ENCODE measurements at regions of chr4 and their contacts with region 1.

Region 1: DNA sequence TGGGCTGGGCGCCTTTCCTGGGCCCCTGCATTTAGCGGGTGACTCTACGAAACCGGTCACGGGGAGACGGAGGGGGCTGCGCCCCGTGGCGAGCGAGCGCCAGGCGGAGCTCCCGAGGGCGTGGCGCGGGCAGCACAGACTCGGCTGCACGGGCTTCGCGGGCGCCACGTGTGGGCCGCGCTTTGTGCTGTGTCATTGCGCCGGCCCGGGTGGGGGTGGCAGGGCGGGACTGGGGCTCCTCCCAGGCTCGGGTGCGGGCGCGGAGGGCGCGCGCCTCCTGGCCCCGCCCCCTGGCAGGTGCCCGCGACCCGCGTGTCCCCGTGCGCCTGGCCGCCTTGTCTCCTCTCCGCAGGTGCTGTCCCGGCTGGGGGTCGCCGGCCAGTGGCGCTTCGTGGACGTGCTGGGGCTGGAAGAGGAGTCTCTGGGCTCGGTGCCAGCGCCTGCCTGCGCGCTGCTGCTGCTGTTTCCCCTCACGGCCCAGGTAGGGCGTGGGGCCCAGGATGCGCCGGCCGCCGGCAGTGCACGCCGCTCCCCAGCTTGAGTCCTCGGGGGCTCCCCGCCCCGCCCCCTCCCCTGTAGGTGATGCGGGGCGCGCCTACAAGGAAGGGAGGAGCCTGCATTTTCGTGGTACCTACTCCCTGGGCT is 651 bp downstream of the UCHL1 start:
- DNase-seq: peak; percentile 36
- H3K4me3 ChIP-seq: peak overlapping the region; percentile 35 to 54 (median 48)
- H3K27ac ChIP-seq: peak overlapping the region; percentile 0
- H3K4me1 ChIP-seq: peaks cover 12% of the 10 kb centered on the region
- H3K27me3 ChIP-seq: peaks cover 14 to 15% of the 10 kb centered on the region in 2 experiments
- CTCF ChIP-seq: no peak
- POLR2A ChIP-seq: no peak

Region 2: GRCh38 chr4:40685300-40685699 is 572.1 kb before region 1 on chr4:
- CTCF ChIA-PET with region 1: no interaction called
- POLR2A ChIA-PET with region 1: no interaction called
- dilution Hi-C with region 1: no loop called
- intact Hi-C with region 1: no loop called
- DNase-seq: no peak
- H3K4me3 ChIP-seq: no peak overlapping the region
- H3K27ac ChIP-seq: no peak overlapping the region
- H3K4me1 ChIP-seq: no peaks in the 10 kb centered on the region
- H3K27me3 ChIP-seq: peaks cover 2 to 6% of the 10 kb centered on the region in 2 experiments
- CTCF ChIP-seq: no peak
- POLR2A ChIP-seq: no peak

Region 3: DNA sequence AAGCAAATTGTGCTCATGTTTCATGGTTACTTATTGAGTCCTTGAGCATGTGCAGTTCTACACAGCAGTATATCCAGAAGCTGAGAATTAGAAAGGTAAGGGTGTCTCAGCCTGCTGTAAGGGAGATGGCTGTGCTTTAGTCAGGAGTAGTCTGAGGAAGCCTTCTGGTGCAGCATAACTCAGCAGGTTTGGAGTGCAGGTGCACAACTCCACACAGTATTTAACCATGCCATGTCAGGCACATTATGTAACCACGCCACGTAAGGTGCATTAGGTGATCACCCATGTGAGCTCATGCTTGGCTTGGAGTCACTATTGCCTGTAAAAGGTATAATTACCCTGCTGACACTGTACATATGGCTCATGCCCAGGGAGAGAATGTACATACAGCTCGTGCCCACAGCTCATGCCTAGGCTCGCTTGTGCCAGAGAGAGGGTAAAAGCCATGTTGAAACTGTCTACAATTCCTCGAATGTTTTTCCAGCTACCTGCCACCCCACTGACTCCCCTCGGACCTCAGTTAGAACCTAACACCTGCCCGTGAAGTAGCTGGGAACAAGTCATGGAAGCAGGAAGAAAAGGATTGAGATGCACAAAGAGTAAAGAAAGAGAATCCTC is 37.2 kb after region 1 on chr4:
- CTCF ChIA-PET with region 1: no interaction called
- POLR2A ChIA-PET with region 1: no interaction called
- dilution Hi-C with region 1: no loop called
- intact Hi-C with region 1: no loop called
- DNase-seq: no peak
- H3K4me3 ChIP-seq: no peak overlapping the region
- H3K27ac ChIP-seq: no peak overlapping the region
- H3K4me1 ChIP-seq: peaks cover 2% of the 10 kb centered on the region
- H3K27me3 ChIP-seq: peaks cover 3% of the 10 kb centered on the region in 2 experiments
- CTCF ChIP-seq: no peak
- POLR2A ChIP-seq: no peak

Region 4: DNA sequence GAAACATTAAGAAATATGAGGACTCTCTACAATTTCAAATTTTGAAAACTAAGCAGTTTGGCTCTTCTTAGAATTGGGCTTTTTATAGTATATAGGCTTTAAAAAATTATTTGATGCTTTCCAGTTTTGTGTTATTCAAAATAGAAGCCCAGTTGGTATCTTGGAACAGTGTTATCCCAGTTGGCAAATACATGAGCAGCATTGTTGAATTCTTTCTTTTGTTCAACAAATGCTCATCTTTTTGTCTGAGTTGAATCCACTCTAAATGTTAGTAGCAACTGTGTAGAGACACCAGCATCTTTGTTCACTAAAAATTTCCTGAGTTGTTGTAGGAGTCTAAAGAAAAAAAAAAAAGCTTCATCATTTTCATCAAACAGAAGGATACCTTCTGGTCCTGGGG is 239.6 kb after region 1 on chr4:
- CTCF ChIA-PET with region 1: no interaction called
- POLR2A ChIA-PET with region 1: no interaction called
- dilution Hi-C with region 1: no loop called
- intact Hi-C with region 1: no loop called
- DNase-seq: no peak
- H3K4me3 ChIP-seq: no peak overlapping the region
- H3K27ac ChIP-seq: no peak overlapping the region
- H3K4me1 ChIP-seq: no peaks in the 10 kb centered on the region
- H3K27me3 ChIP-seq: peaks cover 8 to 12% of the 10 kb centered on the region in 2 experiments
- CTCF ChIP-seq: no peak
- POLR2A ChIP-seq: no peak

Region 5: DNA sequence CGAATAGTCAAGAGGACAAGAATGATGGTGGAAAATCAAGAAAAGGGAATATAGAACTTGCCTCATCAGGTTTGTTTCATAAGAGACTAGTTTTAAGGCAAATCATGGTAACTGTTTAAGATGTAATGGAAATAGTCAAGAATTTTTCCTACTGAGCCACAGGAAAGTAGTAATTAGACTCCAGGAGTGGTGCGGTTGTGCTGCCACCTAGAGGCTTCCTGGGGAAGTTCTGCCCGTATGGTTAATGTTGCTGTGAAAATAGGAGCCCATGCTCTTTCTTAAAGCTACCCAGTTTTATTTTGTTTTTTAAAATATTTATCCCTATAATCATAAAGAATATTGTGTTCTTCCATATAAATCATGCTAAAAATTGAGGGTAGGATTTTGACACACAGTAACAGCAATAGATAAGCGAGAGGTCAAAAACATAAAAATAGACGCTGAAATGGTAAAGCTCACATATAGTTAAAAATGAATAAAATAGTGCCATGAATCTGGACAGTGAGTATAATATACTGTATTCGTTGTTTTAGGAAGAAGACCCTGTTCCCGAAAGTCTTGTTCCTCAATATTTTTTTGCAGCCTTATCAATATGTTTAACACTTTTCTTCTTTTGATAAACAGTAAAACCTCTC is 404.2 kb after region 1 on chr4:
- CTCF ChIA-PET with region 1: interaction called, 40 read pairs
- POLR2A ChIA-PET with region 1: no interaction called
- dilution Hi-C with region 1: no loop called
- intact Hi-C with region 1: no loop called
- DNase-seq: peak; percentile 69
- H3K4me3 ChIP-seq: no peak overlapping the region
- H3K27ac ChIP-seq: no peak overlapping the region
- H3K4me1 ChIP-seq: no peaks in the 10 kb centered on the region
- H3K27me3 ChIP-seq: peaks cover 2 to 12% of the 10 kb centered on the region in 2 experiments
- CTCF ChIP-seq: peak; percentile 82 to 87
- POLR2A ChIP-seq: no peak

Region 6: DNA sequence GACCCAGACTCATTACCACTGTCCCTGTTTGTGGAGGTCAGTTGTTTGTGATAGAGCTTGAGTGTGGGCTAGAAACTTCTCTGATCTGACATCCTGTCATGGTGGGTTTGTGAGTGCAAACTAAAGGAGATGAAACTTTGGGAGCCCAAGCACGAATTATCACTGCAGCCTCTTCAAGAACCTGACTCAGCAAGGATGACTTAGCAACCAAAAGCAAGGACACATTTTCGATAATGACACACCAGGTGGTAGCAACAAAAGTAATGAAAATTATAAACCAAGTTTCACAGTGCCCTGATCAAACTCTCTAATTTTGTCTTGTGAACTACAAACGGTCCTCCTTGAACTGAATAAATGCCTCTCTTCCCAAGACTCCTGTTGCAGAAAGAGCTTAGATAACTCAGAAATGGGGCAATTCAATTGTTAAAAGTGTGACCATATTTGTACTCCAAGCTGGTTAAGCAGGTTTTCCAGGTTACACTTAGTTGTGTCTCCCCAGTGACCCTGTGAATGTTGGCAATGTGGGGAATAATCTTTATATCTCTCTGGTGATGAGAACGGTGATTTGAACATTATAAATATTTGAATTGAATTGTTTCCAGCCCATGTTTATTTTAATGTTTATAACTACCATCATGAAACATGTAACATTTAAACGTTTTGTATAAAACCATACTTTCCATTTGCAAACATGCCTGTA is 1452.2 kb after region 1 on chr4:
- CTCF ChIA-PET with region 1: no interaction called
- POLR2A ChIA-PET with region 1: no interaction called
- dilution Hi-C with region 1: no loop called
- intact Hi-C with region 1: no loop called
- DNase-seq: no peak
- H3K4me3 ChIP-seq: no peak overlapping the region
- H3K27ac ChIP-seq: no peak overlapping the region
- H3K4me1 ChIP-seq: no peaks in the 10 kb centered on the region
- H3K27me3 ChIP-seq: no peaks in the 10 kb centered on the region
- CTCF ChIP-seq: no peak
- POLR2A ChIP-seq: no peak